ENCODE measurements at regions of chr9 and their contacts with region 1.

Region 1: DNA sequence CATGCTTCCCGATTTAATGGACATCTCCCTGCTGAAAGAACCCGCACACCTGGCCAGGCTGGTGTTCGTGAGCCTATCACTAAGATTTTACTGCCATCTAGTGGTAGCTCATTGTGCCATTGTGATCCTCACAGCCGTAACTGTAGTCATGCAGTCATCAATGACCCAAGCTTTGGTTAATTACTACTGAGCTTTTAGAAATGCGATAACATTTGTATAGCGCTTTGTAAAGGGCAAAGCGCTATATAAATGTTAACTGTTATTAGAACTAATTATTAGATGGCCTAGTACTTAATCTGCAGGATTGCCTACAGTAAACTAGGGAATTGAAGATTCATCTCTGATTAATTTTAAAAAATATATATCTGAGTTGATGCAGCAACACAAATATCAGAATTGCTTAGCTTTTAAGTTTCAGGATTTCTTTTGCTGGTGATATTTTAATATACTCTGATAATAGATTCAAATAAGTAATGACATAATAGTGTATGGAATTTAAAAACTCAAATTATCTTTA is 90.2 kb downstream of the HACD4 start:
- DNase-seq: no peak
- H3K4me3 ChIP-seq: no peak overlapping the region
- H3K27me3 ChIP-seq: no peaks in the 10 kb centered on the region
- CTCF ChIP-seq: peak; percentile 86

Region 2: GRCh38 chr9:20356403-20357035 is 584.7 kb before region 1 on chr9:
- CTCF ChIA-PET with region 1: interaction called, 10 read pairs
- POLR2A ChIA-PET with region 1: no interaction called
- DNase-seq: peak; percentile 41
- H3K4me3 ChIP-seq: no peak overlapping the region
- H3K27me3 ChIP-seq: no peaks in the 10 kb centered on the region
- CTCF ChIP-seq: peak; percentile 78

Region 3: DNA sequence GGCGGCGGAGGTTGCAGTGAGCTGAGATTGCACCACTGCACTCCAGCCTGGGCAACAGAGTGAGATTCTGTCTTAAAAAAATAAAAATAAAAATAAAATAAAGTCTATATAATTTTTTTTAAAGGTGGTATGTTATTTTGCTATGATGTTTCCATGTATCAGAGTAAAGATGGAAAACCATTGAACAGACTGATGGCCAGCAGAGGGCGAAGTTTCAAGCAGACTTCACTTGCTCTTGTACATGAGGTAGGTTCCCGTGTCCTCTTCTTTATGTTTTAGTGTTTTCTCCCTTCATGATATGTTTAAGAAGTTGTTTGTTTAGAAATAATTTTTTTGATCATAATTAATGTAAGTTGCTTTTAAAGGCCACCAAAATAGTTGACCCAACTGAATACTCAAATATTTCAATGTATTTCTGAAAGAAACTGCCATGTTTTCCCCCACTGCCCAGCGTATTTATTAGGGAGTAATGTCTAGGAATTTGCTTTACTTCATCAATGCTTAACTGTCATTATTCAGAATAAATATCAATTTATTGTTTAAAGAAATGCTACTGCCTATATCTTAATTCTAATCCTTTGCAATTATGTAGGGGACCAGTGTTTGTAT is 56.1 kb before region 1 on chr9:
- CTCF ChIA-PET with region 1: interaction called, 16 read pairs
- POLR2A ChIA-PET with region 1: no interaction called
- DNase-seq: no peak
- H3K4me3 ChIP-seq: no peak overlapping the region
- H3K27me3 ChIP-seq: no peaks in the 10 kb centered on the region
- CTCF ChIP-seq: peak; percentile 68

Region 4: GRCh38 chr9:20906326-20906725 is 34.9 kb before region 1 on chr9:
- CTCF ChIA-PET with region 1: no interaction called
- POLR2A ChIA-PET with region 1: no interaction called
- DNase-seq: no peak
- H3K4me3 ChIP-seq: no peak overlapping the region
- H3K27me3 ChIP-seq: no peaks in the 10 kb centered on the region
- CTCF ChIP-seq: no peak

Region 5: GRCh38 chr9:20929276-20929675 is 12.0 kb before region 1 on chr9:
- CTCF ChIA-PET with region 1: interaction called, 11 read pairs
- POLR2A ChIA-PET with region 1: no interaction called
- DNase-seq: no peak
- H3K4me3 ChIP-seq: no peak overlapping the region
- H3K27me3 ChIP-seq: no peaks in the 10 kb centered on the region
- CTCF ChIP-seq: no peak

Region 6: GRCh38 chr9:21110708-21111576 is 169.7 kb after region 1 on chr9:
- CTCF ChIA-PET with region 1: interaction called, 34 read pairs
- POLR2A ChIA-PET with region 1: no interaction called
- DNase-seq: no peak
- H3K4me3 ChIP-seq: no peak overlapping the region
- H3K27me3 ChIP-seq: no peaks in the 10 kb centered on the region
- CTCF ChIP-seq: peak; percentile 74